Psoas muscle (tissue), 8 donors: ENCODE measurements at regions of chr1 and their contacts with region 1.

Region 1: GRCh38 chr1:15028102-15028501 is 125.4 kb upstream of the TMEM51 start:
- DNase-seq: peak; percentile 66 to 68
- ATAC-seq: peak in 3 of 4 donors; percentile 28 to 51 (median 37)
- H3K4me3 ChIP-seq: no peak overlapping the region
- H3K27ac ChIP-seq: no peak overlapping the region
- H3K4me1 ChIP-seq: no peaks in the 10 kb centered on the region
- H3K27me3 ChIP-seq: no peaks in the 10 kb centered on the region
- CTCF ChIP-seq: no peak

Region 2: DNA sequence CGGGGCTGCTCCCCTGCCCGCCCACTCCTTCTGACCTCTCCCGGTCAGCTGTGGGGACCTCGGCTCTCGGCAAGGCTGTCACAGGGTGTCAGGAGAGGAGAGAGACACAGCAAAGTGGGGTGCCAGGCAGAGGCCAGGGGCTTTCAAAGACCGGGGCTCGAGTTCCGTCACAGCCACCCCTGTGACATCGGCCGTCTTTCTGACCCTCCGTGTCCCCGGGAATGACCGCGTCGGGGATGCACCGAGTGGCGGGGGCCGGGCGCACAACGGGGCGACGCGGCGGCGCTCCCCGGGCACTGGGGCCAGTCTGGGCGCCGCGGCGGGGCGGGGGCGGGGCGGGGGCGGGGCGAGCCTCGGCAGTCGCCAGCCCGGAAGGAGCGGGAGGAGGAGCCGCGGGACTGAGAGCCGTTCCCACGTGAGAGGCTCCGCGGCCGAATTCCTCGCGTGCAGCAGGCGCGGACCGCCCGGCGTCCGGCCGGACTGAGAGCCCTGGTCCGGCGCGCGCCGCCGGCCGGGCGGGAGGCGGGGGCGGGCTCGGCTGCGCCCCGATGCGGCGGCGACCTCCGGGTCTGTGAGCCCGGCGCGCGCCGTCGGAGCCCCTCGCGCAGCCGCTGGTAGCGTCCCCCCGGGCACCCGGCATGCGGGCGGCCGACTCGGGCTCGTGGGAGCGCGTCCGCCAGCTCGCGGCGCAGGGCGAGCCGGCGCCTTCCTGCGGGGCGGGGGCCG is 104.2 kb before region 1 on chr1:
- intact Hi-C with region 1: loop called in 1 of 2 experiments (anchors 5 kb)
- DNase-seq: peak; percentile 78 to 79
- ATAC-seq: peak; percentile 34 to 67 (median 56)
- H3K4me3 ChIP-seq: no peak overlapping the region
- H3K27ac ChIP-seq: no peak overlapping the region
- H3K4me1 ChIP-seq: no peaks in the 10 kb centered on the region
- H3K27me3 ChIP-seq: peaks cover 0 to 41% (median 8%) of the 10 kb centered on the region in 3 donors
- CTCF ChIP-seq: no peak

Region 3: GRCh38 chr1:14996133-14997050 is 31.7 kb before region 1 on chr1:
- intact Hi-C with region 1: no loop called
- DNase-seq: peak in 1 of 2 donors; percentile 48
- ATAC-seq: peak in 1 of 4 donors; percentile 43
- H3K4me3 ChIP-seq: no peak overlapping the region
- H3K27ac ChIP-seq: no peak overlapping the region
- H3K4me1 ChIP-seq: no peaks in the 10 kb centered on the region
- H3K27me3 ChIP-seq: peaks cover 0 to 9% (median 3%) of the 10 kb centered on the region in 3 donors
- CTCF ChIP-seq: no peak

Region 4: DNA sequence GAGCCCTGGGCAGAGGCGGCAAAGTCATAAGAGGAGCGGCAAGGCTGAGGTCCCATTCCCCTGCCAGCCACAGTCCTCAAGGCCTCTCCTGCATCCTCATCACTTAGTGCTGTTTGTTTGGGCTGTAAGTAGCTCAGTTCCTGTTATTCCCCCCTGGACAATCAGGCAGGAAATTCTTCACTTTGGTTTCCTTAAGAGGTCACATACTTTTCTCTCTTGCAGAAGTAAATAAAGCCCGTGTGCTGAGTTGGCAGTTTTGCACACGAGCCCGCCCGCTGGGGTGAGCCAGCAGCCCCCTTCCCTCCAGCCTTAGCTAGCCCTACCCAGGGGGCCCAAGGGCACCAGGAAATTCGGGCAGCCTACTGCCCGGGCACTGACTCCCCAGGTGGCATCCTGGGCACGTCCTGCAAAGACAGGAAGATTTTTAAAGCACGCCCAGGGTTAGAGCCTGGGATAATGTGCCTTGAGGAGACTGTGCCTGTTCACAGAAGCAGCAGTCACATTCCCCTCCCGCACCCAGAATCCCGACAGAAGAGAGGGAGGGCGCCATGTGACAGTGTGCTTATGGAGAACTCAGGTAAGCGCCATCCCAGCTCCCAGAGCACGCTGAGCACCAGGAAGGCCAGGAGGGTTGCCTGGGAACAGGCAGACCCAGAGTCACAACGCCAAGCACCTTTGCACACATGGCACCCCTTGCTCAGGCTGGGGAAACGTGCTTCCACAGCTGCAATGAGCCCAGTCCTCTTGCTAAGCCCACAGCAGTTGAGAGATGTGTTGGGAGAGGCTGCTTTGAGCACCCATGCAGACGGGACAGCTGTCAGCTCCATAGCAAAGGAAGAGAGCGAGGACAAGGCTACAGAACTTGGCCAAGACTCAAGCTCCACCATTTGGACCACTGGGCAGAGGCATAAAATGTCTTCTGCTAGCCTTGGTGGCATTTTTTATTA is 19.0 kb before region 1 on chr1:
- intact Hi-C with region 1: no loop called
- DNase-seq: no peak
- ATAC-seq: no peak
- H3K4me3 ChIP-seq: no peak overlapping the region
- H3K27ac ChIP-seq: no peak overlapping the region
- H3K4me1 ChIP-seq: no peaks in the 10 kb centered on the region
- H3K27me3 ChIP-seq: peaks cover 0 to 2% (median 0%) of the 10 kb centered on the region in 3 donors
- CTCF ChIP-seq: no peak

Region 5: DNA sequence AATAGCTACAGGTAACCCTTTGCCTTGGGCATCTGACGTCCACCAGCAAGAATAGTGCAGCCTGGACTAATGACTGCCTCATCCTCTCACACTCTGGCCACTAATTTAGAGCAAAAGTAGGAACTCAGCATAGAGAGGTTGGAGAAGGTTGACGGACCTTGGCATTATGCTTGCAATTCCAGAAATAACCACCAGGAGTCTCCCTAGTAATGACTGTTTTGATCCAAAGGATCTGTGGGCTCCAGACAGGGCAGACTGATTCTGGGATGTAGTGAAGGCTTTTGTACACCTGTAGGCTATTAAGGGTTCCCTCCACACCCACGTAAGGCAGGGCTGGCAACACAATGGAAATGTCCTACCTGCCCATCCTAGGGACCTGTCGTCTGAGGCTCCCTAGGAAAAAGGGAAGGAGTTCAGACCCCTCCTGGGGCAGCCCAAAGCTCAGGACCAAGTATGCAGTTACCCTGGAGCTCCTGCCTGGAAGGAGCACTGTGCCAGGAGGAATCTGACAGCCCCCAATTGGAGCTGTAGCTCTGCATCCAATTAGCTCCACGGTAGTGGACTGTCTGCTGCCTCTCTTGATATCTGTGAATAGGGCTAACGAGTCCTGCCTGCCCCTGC is 34.5 kb after region 1 on chr1:
- intact Hi-C with region 1: no loop called
- DNase-seq: no peak
- ATAC-seq: no peak
- H3K4me3 ChIP-seq: no peak overlapping the region
- H3K27ac ChIP-seq: no peak overlapping the region
- H3K4me1 ChIP-seq: no peaks in the 10 kb centered on the region
- H3K27me3 ChIP-seq: no peaks in the 10 kb centered on the region
- CTCF ChIP-seq: no peak

Region 6: GRCh38 chr1:15158506-15159165 is 130.5 kb after region 1 on chr1:
- intact Hi-C with region 1: no loop called
- DNase-seq: no peak
- ATAC-seq: no peak
- H3K4me3 ChIP-seq: peak overlapping the region; percentile 7
- H3K27ac ChIP-seq: peak overlapping the region; percentile 16
- H3K4me1 ChIP-seq: no peaks in the 10 kb centered on the region
- H3K27me3 ChIP-seq: peaks cover 0 to 19% (median 0%) of the 10 kb centered on the region in 3 donors
- CTCF ChIP-seq: no peak